SK-N-SH (cell line): ENCODE measurements at regions of chr16 and their contacts with region 1.

Region 1: DNA sequence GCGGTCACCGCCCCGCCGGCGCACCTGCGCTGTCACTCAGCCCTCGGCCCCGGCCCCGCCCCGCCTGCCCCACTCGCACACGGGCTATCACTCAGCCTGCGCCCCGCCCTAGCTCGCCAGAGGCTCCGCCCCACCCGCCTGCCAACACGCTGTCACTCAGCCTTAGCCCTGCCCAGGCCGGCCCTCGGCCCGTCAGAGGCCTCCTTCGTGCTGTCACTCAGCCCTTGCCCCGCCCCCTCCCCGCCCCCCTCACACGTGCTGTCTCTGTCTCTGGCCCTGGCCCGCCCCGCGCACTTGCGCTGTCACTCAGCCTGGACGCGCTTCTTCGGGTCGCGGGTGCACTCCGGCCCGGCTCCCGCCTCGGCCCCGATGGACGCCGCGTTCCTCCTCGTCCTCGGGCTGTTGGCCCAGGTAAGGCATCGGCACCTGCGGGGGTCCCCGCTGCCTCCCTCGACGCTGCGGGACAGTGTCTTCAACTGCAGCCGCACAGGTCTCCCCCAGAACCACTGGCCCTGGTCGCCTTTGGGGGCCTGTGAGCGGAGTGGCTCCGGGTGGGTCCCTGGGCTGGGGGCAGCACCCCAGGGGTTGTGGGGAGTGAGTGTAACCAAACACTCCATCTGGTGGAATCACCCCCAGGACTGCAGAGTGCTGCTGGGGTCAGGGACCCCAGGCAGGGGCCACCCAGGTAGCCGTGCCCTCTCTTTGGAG is at the start of gene CDH15:
- DNase-seq: peak; percentile 98
- H3K4me3 ChIP-seq: peak within 1 kb of the TSS in 1 of 2 experiments; percentile 21; a peak in 1 of 4 replicates
- H3K27ac ChIP-seq: no peak within 1 kb of the TSS
- H3K4me1 ChIP-seq: peaks cover 0 to 27% of the 10 kb centered on the region in 2 experiments; a peak in 1 of 4 replicates
- H3K27me3 ChIP-seq: peaks cover 24% of the 10 kb centered on the region; the same call in 1 of the 2 replicates
- CTCF ChIP-seq: no peak
- EP300 ChIP-seq: no peak
- RAD21 ChIP-seq: no peak
- polyA plus RNA-seq, gene CDH15: 0.03 and 0.08 TPM in 2 replicates

Region 2: GRCh38 chr16:88743693-88744576 is 427.7 kb before region 1 on chr16:
- CTCF ChIA-PET with region 1: interaction called, 19 read pairs
- POLR2A ChIA-PET with region 1: no interaction called
- DNase-seq: peak; percentile 95
- H3K4me3 ChIP-seq: peak overlapping the region in 1 of 2 experiments; percentile 9; a peak in 1 of 4 replicates
- H3K27ac ChIP-seq: no peak overlapping the region
- H3K4me1 ChIP-seq: peaks cover 0 to 3% of the 10 kb centered on the region in 2 experiments; a peak in 1 of 4 replicates
- H3K27me3 ChIP-seq: no peaks in the 10 kb centered on the region
- CTCF ChIP-seq: peak; percentile 81
- EP300 ChIP-seq: no peak
- RAD21 ChIP-seq: peak; percentile 64

Region 3: DNA sequence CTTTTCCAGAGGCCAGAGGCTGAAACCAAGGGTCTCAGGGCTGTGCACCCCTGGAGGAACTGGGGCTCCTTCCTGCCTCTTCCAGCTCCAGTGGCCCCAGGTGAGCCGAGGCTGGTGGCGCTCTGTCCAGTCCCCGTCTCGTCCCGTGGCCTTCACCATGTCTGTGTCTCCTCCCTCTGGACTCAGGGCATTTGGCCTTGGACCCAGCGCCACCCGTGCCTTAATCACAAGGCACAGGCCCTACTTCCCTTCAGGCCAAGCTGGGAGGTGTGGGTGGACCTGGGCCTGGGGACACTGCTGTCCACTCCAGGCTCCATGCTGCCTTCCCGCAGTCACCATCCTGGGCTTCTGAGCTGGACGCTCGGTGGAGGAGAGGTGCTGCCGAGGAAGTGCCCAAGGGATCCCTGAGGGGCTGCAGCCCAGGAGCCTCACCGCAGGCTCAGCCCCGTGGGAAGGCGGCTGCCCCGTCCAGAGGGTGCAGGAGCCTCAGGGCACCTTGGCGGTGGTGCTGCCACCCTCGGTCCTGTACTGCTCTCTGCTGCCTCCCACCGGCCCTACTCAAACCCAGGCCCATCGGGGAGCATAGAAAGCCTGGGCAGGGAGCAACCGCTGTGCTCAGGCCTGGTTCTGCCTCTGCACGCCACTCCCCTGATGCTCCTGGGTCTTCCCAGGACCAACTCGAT is 350.3 kb before region 1 on chr16:
- CTCF ChIA-PET with region 1: interaction called, 82 read pairs
- POLR2A ChIA-PET with region 1: no interaction called
- DNase-seq: no peak
- H3K4me3 ChIP-seq: no peak overlapping the region
- H3K27ac ChIP-seq: no peak overlapping the region
- H3K4me1 ChIP-seq: no peaks in the 10 kb centered on the region
- H3K27me3 ChIP-seq: no peaks in the 10 kb centered on the region
- CTCF ChIP-seq: peak; percentile 12; the same call in 1 of the 2 replicates
- EP300 ChIP-seq: no peak
- RAD21 ChIP-seq: no peak

Region 4: DNA sequence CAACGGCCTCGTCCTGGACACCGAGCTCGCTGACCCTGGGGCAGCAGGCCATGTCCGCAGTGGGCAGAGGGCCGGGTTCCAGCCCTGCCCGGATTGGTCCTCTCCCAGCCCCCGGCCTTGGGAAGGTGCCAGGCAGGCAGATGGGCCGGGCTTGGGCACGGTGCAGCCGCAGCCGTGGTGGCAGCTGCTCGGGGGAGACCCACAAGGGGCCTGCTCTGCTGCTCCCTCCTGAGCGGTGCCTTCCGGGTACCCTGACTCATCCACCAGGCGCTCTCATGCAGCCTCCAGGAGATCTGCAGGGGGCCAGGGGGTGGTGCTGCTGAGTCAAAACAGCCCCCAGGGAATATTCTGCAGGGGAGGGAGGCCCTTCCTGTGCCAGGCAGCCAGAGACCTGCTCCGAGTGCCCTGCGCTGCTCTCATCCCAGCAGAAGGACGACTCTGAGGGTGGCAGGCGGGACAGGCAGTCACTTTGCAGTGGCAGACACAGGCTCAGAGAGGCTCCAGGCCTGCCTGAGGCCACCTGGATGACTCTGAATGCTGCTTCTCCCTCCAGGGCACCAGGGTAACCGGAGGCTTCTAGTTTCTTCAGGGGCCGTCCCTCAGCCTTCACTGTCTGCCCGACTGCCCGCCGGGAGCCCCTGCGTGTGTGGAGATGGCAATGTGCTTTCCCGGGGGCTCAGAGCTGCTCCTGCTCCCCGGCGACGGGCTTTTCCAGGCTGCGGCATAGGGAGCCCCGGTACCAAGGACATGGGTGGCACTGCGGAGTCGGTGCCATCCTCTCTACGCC is 246.3 kb before region 1 on chr16:
- CTCF ChIA-PET with region 1: interaction called, 18 read pairs
- POLR2A ChIA-PET with region 1: no interaction called
- DNase-seq: peak; percentile 80
- H3K4me3 ChIP-seq: peak overlapping the region in 1 of 2 experiments; percentile 39; a peak in 1 of 4 replicates
- H3K27ac ChIP-seq: no peak overlapping the region
- H3K4me1 ChIP-seq: peaks cover 18 to 35% of the 10 kb centered on the region in 2 experiments; a peak in 3 of 4 replicates
- H3K27me3 ChIP-seq: peaks cover 42% of the 10 kb centered on the region
- CTCF ChIP-seq: peak; percentile 59
- EP300 ChIP-seq: no peak
- RAD21 ChIP-seq: peak; percentile 19; the same call in 1 of the 2 replicates

Region 5: DNA sequence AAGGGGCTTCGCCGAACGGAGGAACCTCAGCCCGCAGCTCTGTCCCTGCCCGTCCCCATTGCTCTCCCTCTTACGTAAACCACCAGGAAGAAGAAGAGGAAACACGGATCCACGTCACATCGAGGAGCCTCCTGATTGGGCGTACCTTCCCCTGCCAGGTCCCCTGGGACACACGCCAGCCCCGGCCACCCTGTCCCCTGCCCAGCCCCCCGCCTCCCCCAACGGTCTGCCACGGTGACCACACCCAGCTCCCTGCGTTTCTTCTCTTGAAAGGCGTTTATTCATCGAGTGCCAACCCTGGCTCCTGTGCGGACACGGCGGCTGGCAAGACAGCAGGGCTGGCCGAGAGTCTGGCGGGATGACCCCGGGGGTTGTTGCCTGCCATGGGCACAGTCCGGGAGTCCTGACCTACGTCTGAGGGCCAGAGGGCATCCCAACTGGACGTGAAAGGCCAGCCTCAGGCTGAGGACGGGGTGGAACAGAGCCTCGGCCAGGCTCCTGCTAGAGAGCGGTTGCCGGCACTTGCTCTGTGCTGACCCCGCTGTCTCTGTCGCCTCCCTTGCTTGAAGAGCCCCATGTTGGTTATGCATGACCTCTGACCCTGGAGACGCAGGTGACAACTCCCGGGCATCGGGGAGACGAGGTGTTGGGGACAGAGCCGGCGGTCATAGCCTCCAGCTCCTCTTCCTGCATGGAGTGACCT is 118.6 kb before region 1 on chr16:
- CTCF ChIA-PET with region 1: interaction called, 29 read pairs
- POLR2A ChIA-PET with region 1: no interaction called
- DNase-seq: peak; percentile 90
- H3K4me3 ChIP-seq: peak overlapping the region; percentile 53 to 62
- H3K27ac ChIP-seq: no peak overlapping the region; a peak in 1 of 4 replicates
- H3K4me1 ChIP-seq: peaks cover 0 to 36% of the 10 kb centered on the region in 2 experiments; a peak in 1 of 4 replicates
- H3K27me3 ChIP-seq: peaks cover 14% of the 10 kb centered on the region; the same call in 1 of the 2 replicates
- CTCF ChIP-seq: peak; percentile 23
- EP300 ChIP-seq: no peak
- RAD21 ChIP-seq: no peak

Region 6: DNA sequence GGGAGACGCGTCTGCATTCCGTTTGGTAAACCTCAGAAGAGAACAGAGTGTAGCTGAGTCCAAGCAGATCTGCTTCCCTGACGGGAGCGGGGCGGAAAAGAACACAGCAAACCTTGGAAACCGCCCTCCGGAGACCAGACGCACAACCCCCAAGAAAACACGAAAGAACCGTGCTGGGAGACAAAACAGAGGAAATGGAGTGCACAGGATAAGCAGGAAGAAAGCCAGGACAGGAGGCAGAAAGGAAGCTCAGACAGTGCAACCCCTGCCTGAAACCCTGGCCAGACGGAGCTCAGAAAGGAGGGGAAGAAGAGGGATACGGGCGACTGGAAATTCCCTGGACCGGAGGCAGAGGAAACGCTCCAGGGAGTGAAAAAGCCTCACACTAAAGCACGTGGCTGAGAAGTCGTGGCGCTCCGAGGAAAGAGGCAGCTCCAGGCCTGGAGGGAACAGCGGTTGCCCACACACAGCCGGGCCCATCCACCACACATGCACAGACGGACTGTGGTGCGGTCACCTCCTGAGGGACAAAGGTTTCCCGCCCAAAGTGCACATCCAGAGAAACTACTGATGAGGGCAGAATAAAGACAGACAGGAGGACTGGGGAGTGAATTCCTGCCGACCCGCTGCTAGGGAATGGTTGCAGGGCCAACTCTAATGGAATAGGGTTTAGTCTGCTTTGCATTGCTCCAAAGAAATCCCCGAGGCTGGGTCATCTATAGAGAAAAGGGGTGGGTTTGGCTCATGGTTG is 452.1 kb after region 1 on chr16:
- CTCF ChIA-PET with region 1: no interaction called
- POLR2A ChIA-PET with region 1: no interaction called
- DNase-seq: no peak
- H3K4me3 ChIP-seq: no peak overlapping the region
- H3K27ac ChIP-seq: no peak overlapping the region
- H3K4me1 ChIP-seq: no peaks in the 10 kb centered on the region
- H3K27me3 ChIP-seq: no peaks in the 10 kb centered on the region
- CTCF ChIP-seq: no peak
- EP300 ChIP-seq: no peak
- RAD21 ChIP-seq: no peak